PC-3 (cell line): ENCODE measurements at regions of chr1 and their contacts with region 1.

Region 1: DNA sequence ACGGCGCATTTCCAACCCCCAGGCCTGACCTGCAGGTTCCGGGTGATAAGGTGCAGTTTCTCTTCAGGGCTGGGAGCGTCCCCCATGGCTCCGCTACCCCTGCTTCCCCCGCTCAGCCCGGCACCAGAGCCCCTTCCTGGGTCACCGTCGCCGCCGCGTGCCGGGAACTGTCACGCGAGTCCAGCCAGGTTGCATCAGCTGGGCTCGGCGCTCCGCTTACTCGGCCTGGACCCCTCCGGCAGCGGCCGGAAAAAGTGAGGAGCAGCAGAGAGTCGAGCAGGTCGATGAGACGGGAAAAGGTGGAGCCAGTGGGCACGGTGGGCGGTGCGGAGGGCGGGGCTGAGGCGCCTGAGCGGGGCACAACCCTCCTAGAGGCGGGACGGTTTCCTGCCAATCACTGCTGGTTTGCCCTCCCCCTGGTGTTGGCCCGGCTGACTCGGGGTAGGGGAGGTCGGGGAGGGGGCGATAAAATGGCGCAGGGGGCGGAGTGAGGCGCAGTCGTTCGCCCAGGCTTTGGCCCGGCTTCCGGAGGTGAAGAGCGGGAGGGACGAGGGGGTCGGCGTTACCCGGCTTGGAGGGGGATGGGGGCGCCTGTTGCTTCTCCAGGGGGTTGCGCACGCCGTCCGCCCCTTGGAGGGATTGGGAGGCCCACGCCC is at the starts of genes S100PBP and YARS1:
- DNase-seq: peak; percentile 98
- ATAC-seq: peak; percentile 92
- H3K4me3 ChIP-seq: peak within 1 kb of the TSS; percentile 89
- H3K27ac ChIP-seq: peak within 1 kb of the TSS; percentile 83
- H3K4me1 ChIP-seq: peaks cover 29% of the 10 kb centered on the region
- H3K27me3 ChIP-seq: no peaks in the 10 kb centered on the region
- CTCF ChIP-seq: no peak
- total RNA-seq, gene S100PBP: 13.2 and 13.8 TPM in 2 replicates
- total RNA-seq, gene YARS1: 108 and 115 TPM in 2 replicates

Region 2: GRCh38 chr1:32798679-32799416 is 18.4 kb before region 1 on chr1:
- CTCF ChIA-PET with region 1: no interaction called
- POLR2A ChIA-PET with region 1: interaction called, 4 read pairs
- intact Hi-C with region 1: loop called (anchors 2 kb)
- DNase-seq: peak; percentile 35
- ATAC-seq: peak; percentile 3; the same call in 1 of the 2 replicates
- H3K4me3 ChIP-seq: peak overlapping the region; percentile 45
- H3K27ac ChIP-seq: peak overlapping the region; percentile 93
- H3K4me1 ChIP-seq: peaks cover 68% of the 10 kb centered on the region
- H3K27me3 ChIP-seq: no peaks in the 10 kb centered on the region
- CTCF ChIP-seq: no peak